ENCODE measurements at regions of chr12 and their contacts with region 1.

Region 1: DNA sequence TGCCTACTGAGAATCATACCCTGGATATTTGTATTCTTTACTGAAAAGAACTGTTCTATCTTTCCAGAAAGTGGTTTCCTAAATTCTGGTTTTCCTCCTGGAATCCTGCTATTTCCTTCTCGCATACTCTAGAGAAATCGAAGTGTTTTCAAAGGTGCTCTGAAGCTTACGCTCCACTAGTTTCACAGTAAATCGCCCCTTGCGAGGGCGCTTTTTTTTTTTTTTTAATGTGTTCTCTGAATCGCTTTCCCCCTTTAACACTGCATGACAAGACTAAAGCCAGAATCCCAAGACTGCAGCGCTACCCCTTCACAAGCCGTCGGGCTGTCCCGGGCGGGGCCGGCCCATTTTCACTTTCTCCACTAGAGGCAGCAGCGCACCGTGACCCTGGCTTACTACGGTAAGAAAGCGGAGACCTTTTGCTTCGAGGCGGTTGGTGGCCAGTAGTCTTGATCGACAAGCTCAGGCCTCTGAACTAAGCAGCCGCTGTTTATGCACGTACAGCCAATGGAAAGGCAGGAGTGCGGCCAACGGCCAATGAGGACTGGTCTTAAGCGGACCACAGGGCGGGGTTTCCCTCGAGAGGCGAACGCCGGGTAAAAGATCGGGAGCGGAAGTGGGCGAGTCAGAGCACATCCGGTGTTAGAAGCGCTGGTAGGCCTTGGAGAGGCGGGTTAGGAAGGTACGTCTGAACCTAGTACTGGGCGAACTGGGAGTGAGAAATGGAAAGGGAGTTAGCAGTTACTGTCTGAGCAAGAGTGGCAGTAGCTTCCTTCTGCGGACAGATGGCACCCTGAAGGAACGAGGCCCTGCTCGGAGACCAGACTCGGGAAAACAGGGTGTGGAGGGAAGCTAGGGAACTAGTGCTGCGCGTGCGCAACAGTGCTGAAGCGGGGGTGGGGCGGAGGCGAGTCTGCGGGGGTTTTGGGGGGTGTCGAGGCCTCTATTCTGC is at the start of gene TMBIM6:
- DNase-seq: peak; percentile 92 to 100 (median 99)
- ATAC-seq: peak; percentile 92
- H3K4me3 ChIP-seq: peak within 1 kb of the TSS; percentile 80
- H3K4me3 Mint-ChIP-seq: peak within 1 kb of the TSS; percentile 91 to 98 (median 94)
- H3K27ac ChIP-seq: peak within 1 kb of the TSS; percentile 96
- H3K27ac Mint-ChIP-seq: peak within 1 kb of the TSS; percentile 96 to 99 (median 98)
- H3K4me1 ChIP-seq: peaks cover 27 to 37% of the 10 kb centered on the region in 2 donors
- H3K4me1 Mint-ChIP-seq: peaks cover 25 to 49% (median 36%) of the 10 kb centered on the region in 7 donors
- H3K27me3 ChIP-seq: no peaks in the 10 kb centered on the region
- H3K27me3 Mint-ChIP-seq: peaks cover 0 to 6% (median 0%) of the 10 kb centered on the region in 5 donors
- total RNA-seq, gene TMBIM6: 307 to 432 (median 381) TPM

Region 2: GRCh38 chr12:49060237-49061156 is 680.7 kb before region 1 on chr12 and contains the start of gene KMT2D:
- CTCF ChIA-PET with region 1: no interaction called
- POLR2A ChIA-PET with region 1: no interaction called
- intact Hi-C with region 1: loop called in 1 of 2 experiments (anchors 5 kb)
- DNase-seq: peak; percentile 80 to 94 (median 91)
- ATAC-seq: peak; percentile 86
- H3K4me3 ChIP-seq: peak within 1 kb of the TSS; percentile 87
- H3K4me3 Mint-ChIP-seq: peak within 1 kb of the TSS; percentile 91 to 98 (median 95)
- H3K27ac ChIP-seq: peak within 1 kb of the TSS; percentile 87
- H3K27ac Mint-ChIP-seq: peak within 1 kb of the TSS; percentile 90 to 99 (median 97)
- H3K4me1 ChIP-seq: peaks cover 38 to 40% of the 10 kb centered on the region in 2 donors
- H3K4me1 Mint-ChIP-seq: peaks cover 44 to 55% (median 51%) of the 10 kb centered on the region in 7 donors
- H3K27me3 ChIP-seq: no peaks in the 10 kb centered on the region
- H3K27me3 Mint-ChIP-seq: no peaks in the 10 kb centered on the region
- total RNA-seq, gene KMT2D: 129 to 167 (median 151) TPM

Region 3: DNA sequence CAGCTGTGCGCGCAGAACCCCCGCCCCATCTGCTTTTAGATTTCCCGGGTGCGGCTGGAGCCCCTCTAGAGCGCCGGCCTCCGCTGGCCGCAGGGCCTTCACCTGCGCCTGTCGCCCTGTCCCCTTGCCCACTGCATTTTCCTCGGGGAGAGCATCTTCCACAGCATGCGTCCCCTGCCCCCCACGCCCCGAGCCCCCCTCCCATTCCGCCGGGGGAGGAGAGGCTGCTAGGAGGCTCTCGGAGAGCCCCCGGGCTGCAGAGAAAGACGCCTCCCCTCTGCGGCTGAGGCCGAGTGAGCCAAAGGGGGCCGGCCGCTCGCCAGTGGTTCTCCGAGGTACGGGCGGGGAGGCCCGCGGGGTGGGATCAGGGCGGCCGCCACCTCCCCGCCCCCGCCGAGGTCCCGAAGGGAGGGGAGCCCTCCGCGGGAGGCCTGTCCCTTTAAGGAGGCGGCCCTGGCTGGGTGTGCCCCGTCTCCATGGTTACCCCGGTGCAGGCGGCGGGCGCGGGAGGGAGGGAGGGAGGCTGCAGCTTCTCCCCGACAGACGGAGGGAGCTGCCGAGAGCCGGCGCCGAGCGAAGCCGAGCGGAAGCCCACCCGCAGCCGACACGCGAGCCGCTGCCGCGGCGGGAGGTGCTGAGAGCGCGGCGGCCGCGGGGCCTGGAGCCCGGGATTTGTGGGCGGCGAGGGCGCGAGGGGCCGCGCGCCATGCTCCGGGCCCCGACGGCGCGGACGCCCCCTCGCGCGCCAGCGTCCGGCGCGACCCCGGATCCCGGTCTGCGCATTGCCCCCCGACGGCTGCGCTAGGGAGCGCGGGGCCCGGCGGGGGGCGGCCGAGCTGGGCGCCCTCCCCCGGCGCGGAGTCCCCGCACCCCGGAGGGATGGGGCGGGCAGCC is 202.4 kb before region 1 on chr12 and contains the start of gene KCNH3:
- CTCF ChIA-PET with region 1: no interaction called
- POLR2A ChIA-PET with region 1: no interaction called
- intact Hi-C with region 1: loop called in 1 of 2 experiments (anchors 1 kb)
- DNase-seq: peak; percentile 66 to 95 (median 86)
- ATAC-seq: peak; percentile 94
- H3K4me3 ChIP-seq: peak within 1 kb of the TSS; percentile 69
- H3K4me3 Mint-ChIP-seq: peak within 1 kb of the TSS; percentile 66 to 87 (median 80)
- H3K27ac ChIP-seq: peak within 1 kb of the TSS; percentile 11
- H3K27ac Mint-ChIP-seq: peak within 1 kb of the TSS in 6 of 9 donors; percentile 43 to 81 (median 64)
- H3K4me1 ChIP-seq: peaks cover 14 to 15% of the 10 kb centered on the region in 2 donors
- H3K4me1 Mint-ChIP-seq: peaks cover 13 to 37% (median 27%) of the 10 kb centered on the region in 7 donors
- H3K27me3 ChIP-seq: no peaks in the 10 kb centered on the region
- H3K27me3 Mint-ChIP-seq: peaks cover 0 to 66% (median 6%) of the 10 kb centered on the region in 5 donors
- total RNA-seq, gene KCNH3: 0.99 to 5.3 (median 3.8) TPM

Region 4: DNA sequence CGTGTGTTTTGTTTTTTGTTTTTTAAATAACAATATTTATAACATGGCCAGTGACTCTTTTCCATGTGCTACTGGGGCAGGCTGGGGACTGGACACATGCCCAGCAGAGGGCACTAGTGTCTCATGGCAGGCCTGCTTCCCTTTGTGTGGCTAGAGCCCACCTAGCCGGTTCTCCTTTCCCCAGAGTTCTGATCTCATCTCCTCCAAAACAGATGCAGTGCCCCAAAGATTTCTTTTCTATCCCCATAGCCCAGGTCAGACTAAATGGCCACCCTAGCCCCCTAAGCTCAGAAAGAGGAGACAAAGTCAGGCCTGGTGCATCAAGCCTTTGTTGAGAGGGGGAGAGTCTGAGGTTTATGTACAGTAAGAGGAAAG is 96.6 kb before region 1 on chr12:
- CTCF ChIA-PET with region 1: interaction called, 7 read pairs
- POLR2A ChIA-PET with region 1: interaction called, 3 read pairs
- intact Hi-C with region 1: loop called in 1 of 2 experiments (anchors 1 kb)
- DNase-seq: peak; percentile 71 to 86 (median 81)
- ATAC-seq: peak; percentile 96
- H3K4me3 ChIP-seq: no peak overlapping the region
- H3K4me3 Mint-ChIP-seq: peak overlapping the region in 9 of 10 donors; percentile 3 to 69 (median 41)
- H3K27ac ChIP-seq: peak overlapping the region; percentile 32
- H3K27ac Mint-ChIP-seq: peak overlapping the region; percentile 78 to 96 (median 89)
- H3K4me1 ChIP-seq: peaks cover 7 to 10% of the 10 kb centered on the region in 2 donors
- H3K4me1 Mint-ChIP-seq: peaks cover 25 to 56% (median 37%) of the 10 kb centered on the region in 7 donors
- H3K27me3 ChIP-seq: no peaks in the 10 kb centered on the region
- H3K27me3 Mint-ChIP-seq: no peaks in the 10 kb centered on the region

Region 5: DNA sequence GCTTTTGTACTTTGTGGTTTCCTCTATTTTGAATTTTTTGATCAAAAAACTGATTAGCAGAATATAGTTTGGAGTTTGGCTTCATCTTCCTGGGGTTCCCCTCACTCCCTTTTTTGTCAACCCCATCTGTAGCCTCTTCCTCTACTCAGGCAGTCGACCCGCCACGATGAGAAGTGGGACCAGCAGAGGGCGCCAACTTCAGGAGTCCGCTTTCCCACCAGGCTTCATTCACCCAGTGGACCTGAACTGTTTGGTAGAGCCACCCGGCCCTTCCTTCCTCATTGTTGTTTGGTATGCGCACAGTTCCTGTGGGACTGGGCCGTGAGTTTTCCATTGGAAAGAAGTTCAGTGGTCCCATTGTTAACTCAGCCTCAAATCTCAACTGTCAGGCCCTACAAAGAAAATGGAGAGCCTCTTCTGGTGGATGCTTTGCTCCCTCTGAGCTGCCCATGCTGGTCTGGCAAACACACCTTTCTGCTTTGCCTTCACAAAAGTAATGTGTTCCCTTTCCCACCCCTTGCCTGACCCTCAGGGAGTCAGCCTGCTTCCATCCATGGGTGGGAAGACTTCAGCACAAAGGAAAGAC is 21.9 kb after region 1 on chr12:
- CTCF ChIA-PET with region 1: interaction called, 14 read pairs
- POLR2A ChIA-PET with region 1: interaction called, 36 read pairs
- intact Hi-C with region 1: loop called (anchors 1 kb)
- DNase-seq: peak; percentile 61 to 77 (median 68)
- ATAC-seq: peak; percentile 92
- H3K4me3 ChIP-seq: no peak overlapping the region
- H3K4me3 Mint-ChIP-seq: peak overlapping the region; percentile 29 to 78 (median 54)
- H3K27ac ChIP-seq: peak overlapping the region; percentile 57
- H3K27ac Mint-ChIP-seq: peak overlapping the region; percentile 76 to 93 (median 84)
- H3K4me1 ChIP-seq: peaks cover 25 to 43% of the 10 kb centered on the region in 2 donors
- H3K4me1 Mint-ChIP-seq: peaks cover 42 to 65% (median 60%) of the 10 kb centered on the region in 7 donors
- H3K27me3 ChIP-seq: no peaks in the 10 kb centered on the region
- H3K27me3 Mint-ChIP-seq: no peaks in the 10 kb centered on the region

Region 6: DNA sequence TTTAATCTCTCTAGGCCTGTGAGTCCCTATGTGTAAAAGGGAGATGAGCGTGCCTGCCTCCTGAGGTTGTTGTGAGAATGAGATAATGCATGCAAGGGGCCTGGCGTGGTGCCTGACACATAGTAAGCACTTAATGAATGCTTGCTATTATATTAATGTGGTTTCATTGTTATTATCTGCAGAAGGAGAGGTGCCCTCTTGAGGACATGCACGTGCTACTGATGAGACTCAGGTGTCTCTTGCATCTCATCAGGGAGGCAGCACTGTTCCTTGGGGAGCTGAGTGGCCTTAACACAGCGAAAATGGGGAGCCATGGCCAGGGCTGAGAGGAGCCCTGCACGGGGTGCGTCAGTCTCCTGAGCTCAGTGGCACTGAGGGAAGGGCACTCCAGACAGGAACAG is 131.6 kb after region 1 on chr12:
- CTCF ChIA-PET with region 1: no interaction called
- POLR2A ChIA-PET with region 1: no interaction called
- intact Hi-C with region 1: no loop called
- DNase-seq: no peak
- ATAC-seq: no peak
- H3K4me3 ChIP-seq: no peak overlapping the region
- H3K4me3 Mint-ChIP-seq: no peak overlapping the region
- H3K27ac ChIP-seq: no peak overlapping the region
- H3K27ac Mint-ChIP-seq: no peak overlapping the region
- H3K4me1 ChIP-seq: no peaks in the 10 kb centered on the region
- H3K4me1 Mint-ChIP-seq: peaks cover 0 to 3% (median 0%) of the 10 kb centered on the region in 7 donors
- H3K27me3 ChIP-seq: no peaks in the 10 kb centered on the region
- H3K27me3 Mint-ChIP-seq: peaks cover 0 to 3% (median 0%) of the 10 kb centered on the region in 5 donors

Region 7: GRCh38 chr12:49967042-49967776 is 226.0 kb after region 1 on chr12:
- CTCF ChIA-PET with region 1: no interaction called
- POLR2A ChIA-PET with region 1: no interaction called
- intact Hi-C with region 1: loop called in 1 of 2 experiments (anchors 1 kb)
- DNase-seq: peak; percentile 81 to 98 (median 93)
- ATAC-seq: peak; percentile 93
- H3K4me3 ChIP-seq: peak overlapping the region; percentile 81
- H3K4me3 Mint-ChIP-seq: peak overlapping the region; percentile 70 to 83 (median 80)
- H3K27ac ChIP-seq: no peak overlapping the region
- H3K27ac Mint-ChIP-seq: peak overlapping the region in 1 of 9 donors; percentile 14
- H3K4me1 ChIP-seq: peaks cover 0 to 9% of the 10 kb centered on the region in 2 donors
- H3K4me1 Mint-ChIP-seq: peaks cover 0 to 12% (median 4%) of the 10 kb centered on the region in 7 donors
- H3K27me3 ChIP-seq: no peaks in the 10 kb centered on the region
- H3K27me3 Mint-ChIP-seq: peaks cover 31 to 41% (median 35%) of the 10 kb centered on the region in 5 donors

Region 8: GRCh38 chr12:50167041-50167828 is 426.0 kb after region 1 on chr12 and contains the start of gene CERS5:
- CTCF ChIA-PET with region 1: no interaction called
- POLR2A ChIA-PET with region 1: no interaction called
- intact Hi-C with region 1: loop called in 1 of 2 experiments (anchors 1 kb)
- DNase-seq: peak; percentile 87 to 98 (median 93)
- ATAC-seq: peak; percentile 99
- H3K4me3 ChIP-seq: peak within 1 kb of the TSS; percentile 69
- H3K4me3 Mint-ChIP-seq: peak within 1 kb of the TSS; percentile 82 to 98 (median 93)
- H3K27ac ChIP-seq: peak within 1 kb of the TSS; percentile 93
- H3K27ac Mint-ChIP-seq: peak within 1 kb of the TSS; percentile 84 to 98 (median 93)
- H3K4me1 ChIP-seq: peaks cover 11 to 13% of the 10 kb centered on the region in 2 donors
- H3K4me1 Mint-ChIP-seq: peaks cover 16 to 36% (median 30%) of the 10 kb centered on the region in 7 donors
- H3K27me3 ChIP-seq: no peaks in the 10 kb centered on the region
- H3K27me3 Mint-ChIP-seq: no peaks in the 10 kb centered on the region
- total RNA-seq, gene CERS5: 41.0 to 52.2 (median 47.7) TPM